ENCODE measurements at regions of chr7 and their contacts with region 1.

Region 1: DNA sequence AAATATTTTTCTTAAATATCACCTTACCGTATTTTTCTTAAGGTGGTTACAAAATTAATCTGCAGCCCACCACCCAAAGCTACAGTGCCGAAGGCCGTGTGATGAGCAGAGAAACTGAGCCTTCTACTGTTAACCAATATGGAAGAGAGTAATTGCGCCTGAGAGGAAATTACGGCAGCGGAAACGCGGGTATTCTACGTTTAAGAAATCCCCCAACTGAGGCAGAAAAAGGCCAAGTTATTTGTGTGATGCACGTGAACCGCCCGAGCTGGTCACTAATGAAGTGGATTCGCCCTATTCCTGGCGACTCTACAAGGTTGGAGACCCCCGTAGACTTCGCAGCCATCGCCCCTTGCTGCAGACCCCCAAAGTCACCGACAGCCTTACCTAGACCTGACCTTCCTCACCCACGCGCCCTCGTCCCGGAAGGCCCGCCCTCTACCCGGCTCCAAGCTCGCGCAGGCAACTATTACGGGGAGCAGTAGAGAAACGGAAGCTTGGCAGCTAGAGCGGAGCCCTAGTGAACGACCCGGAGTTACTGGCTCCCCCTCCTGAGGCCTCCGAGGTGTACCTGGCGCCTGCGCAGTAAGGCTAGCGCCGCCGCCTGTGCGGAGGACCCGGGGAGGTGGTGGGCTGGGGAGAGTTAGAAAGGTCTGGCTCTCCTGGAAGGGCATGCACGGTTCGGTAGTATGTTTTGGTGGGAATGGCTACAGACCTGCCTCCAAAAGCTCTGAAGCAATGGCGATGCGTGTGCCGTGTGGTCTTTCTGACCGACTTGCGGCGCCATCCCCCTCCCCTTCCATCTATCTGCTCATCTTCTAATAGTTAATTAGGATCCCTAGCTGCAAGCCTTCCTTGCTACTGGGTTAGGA is at the start of gene MRPS33:
- DNase-seq: peak; percentile 95
- H3K4me3 ChIP-seq: peak within 1 kb of the TSS; percentile 60 to 68
- H3K27ac ChIP-seq: peak within 1 kb of the TSS; percentile 76 to 83
- H3K4me1 ChIP-seq: peaks cover 0 to 13% (median 7%) of the 10 kb centered on the region in 4 donors
- H3K27me3 ChIP-seq: peaks cover 0 to 5% of the 10 kb centered on the region in 2 donors
- CTCF ChIP-seq: peak in 1 of 2 experiments; percentile 33

Region 2: DNA sequence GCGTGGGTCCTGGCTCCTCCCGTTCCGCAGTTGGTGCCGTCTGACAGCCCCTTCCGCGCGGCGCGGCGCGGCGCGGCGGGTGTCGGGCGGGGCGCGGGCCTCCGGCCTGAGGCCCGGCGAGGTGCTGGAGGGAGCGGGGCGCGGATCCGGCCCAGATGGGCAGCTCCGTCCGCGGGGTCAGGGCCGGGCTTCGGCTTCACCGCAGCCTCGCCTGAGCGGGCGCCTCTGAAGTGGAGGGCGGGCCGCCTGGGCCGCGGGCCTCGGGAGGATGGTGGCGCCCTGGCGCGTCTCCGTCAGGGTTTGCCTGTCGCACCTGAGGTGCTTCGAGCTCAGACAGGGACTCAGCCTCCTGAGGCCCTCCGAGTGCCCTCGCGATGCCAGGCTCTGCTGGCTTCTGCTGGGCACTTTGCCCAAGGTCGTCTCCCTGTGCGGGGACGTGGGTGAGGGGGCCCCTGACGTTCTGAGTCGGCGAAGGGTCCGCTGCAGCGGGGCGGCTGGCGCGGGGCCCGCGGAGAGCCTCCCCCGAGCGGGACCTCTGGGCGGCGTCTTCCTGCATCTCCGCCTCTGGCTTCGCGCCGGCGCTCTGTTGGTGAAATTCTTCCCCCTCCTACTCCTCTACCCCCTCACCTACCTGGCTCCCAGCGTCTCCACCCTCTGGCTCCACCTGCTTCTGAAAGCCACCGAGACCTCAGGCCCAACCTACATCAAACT is 341.5 kb before region 1 on chr7:
- intact Hi-C with region 1: loop called (anchors 5 kb)
- DNase-seq: peak in 1 of 2 donors; percentile 73
- H3K4me3 ChIP-seq: peak overlapping the region; percentile 68 to 94
- H3K27ac ChIP-seq: peak overlapping the region; percentile 87 to 90
- H3K4me1 ChIP-seq: peaks cover 0 to 32% (median 19%) of the 10 kb centered on the region in 4 donors
- H3K27me3 ChIP-seq: no peaks in the 10 kb centered on the region
- CTCF ChIP-seq: no peak

Region 3: DNA sequence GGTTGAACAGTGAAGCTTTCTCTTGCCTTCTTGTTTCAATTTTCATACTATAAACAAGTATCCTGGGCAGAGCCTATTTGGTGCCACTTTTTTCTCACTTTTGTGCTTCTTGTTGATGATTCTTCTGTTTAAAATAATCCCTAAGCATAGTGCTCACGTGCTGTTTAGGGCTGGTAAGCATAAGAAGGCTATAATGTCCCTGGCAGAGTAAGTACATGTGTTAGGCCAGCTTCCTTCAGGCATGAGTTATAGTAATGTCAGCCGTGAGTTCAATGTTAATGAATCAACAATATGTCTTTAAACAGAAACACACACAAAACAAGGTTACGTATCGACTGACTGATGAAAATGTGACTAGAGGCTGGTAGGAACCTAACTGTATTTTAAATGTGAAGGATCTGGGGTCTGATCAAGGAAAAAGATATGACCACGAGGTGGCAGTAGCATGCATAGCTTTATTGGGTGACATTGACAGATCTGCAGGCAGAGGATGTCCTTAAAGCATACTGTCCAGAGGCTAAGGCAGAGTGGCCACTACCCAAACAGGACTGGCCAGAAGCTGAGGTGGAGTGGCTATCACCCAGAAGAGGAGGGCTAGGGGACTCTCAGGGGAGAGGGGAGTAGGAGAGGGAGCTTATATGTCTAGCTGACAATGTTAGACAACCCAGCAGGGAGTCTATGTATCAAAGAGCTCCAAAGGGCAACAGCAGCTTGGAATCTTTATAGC is 203.8 kb before region 1 on chr7:
- intact Hi-C with region 1: loop called (anchors 5 kb)
- DNase-seq: peak in 1 of 2 donors; percentile 38
- H3K4me3 ChIP-seq: no peak overlapping the region
- H3K27ac ChIP-seq: no peak overlapping the region
- H3K4me1 ChIP-seq: no peaks in the 10 kb centered on the region
- H3K27me3 ChIP-seq: no peaks in the 10 kb centered on the region
- CTCF ChIP-seq: peak; percentile 63 to 68

Region 4: GRCh38 chr7:140876519-140877248 is 138.1 kb before region 1 on chr7:
- intact Hi-C with region 1: no loop called
- DNase-seq: no peak
- H3K4me3 ChIP-seq: no peak overlapping the region
- H3K27ac ChIP-seq: no peak overlapping the region
- H3K4me1 ChIP-seq: peaks cover 0 to 22% (median 9%) of the 10 kb centered on the region in 4 donors
- H3K27me3 ChIP-seq: no peaks in the 10 kb centered on the region
- CTCF ChIP-seq: no peak

Region 5: GRCh38 chr7:140924019-140924820 is 90.5 kb before region 1 on chr7:
- intact Hi-C with region 1: loop called (anchors 10 kb)
- DNase-seq: peak; percentile 68 to 84
- H3K4me3 ChIP-seq: peak overlapping the region; percentile 99 to 100
- H3K27ac ChIP-seq: peak overlapping the region; percentile 100
- H3K4me1 ChIP-seq: peaks cover 0 to 28% (median 3%) of the 10 kb centered on the region in 4 donors
- H3K27me3 ChIP-seq: no peaks in the 10 kb centered on the region
- CTCF ChIP-seq: peak; percentile 22 to 31

Region 6: GRCh38 chr7:141737834-141738591 is 723.3 kb after region 1 on chr7 and contains the start of gene SSBP1:
- intact Hi-C with region 1: loop called (anchors 5 kb)
- DNase-seq: peak; percentile 87 to 94
- H3K4me3 ChIP-seq: peak within 1 kb of the TSS; percentile 67 to 75
- H3K27ac ChIP-seq: peak within 1 kb of the TSS; percentile 78 to 83
- H3K4me1 ChIP-seq: peaks cover 0 to 22% (median 14%) of the 10 kb centered on the region in 4 donors
- H3K27me3 ChIP-seq: no peaks in the 10 kb centered on the region
- CTCF ChIP-seq: peak; percentile 63 to 70

Measured in tibial artery (tissue), 4 donors.